ENCODE measurements at regions of chr7 and their contacts with region 1.

Region 1: GRCh38 chr7:43700059-43700501 is 29.2 kb downstream of the COA1 start:
- DNase-seq: peak; percentile 43
- H3K4me3 ChIP-seq: no peak overlapping the region
- H3K27ac ChIP-seq: no peak overlapping the region
- H3K27me3 ChIP-seq: no peaks in the 10 kb centered on the region
- CTCF ChIP-seq: peak; percentile 73

Region 2: GRCh38 chr7:43454936-43455518 is 245.1 kb before region 1 on chr7:
- CTCF ChIA-PET with region 1: interaction called, 10 read pairs
- POLR2A ChIA-PET with region 1: no interaction called
- DNase-seq: no peak
- H3K4me3 ChIP-seq: no peak overlapping the region
- H3K27ac ChIP-seq: no peak overlapping the region
- H3K27me3 ChIP-seq: no peaks in the 10 kb centered on the region
- CTCF ChIP-seq: peak; percentile 60

Region 3: GRCh38 chr7:43590862-43591550 is 109.1 kb before region 1 on chr7:
- CTCF ChIA-PET with region 1: interaction called, 456 read pairs
- POLR2A ChIA-PET with region 1: no interaction called
- DNase-seq: no peak
- H3K4me3 ChIP-seq: no peak overlapping the region
- H3K27ac ChIP-seq: no peak overlapping the region
- H3K27me3 ChIP-seq: no peaks in the 10 kb centered on the region
- CTCF ChIP-seq: no peak

Region 4: DNA sequence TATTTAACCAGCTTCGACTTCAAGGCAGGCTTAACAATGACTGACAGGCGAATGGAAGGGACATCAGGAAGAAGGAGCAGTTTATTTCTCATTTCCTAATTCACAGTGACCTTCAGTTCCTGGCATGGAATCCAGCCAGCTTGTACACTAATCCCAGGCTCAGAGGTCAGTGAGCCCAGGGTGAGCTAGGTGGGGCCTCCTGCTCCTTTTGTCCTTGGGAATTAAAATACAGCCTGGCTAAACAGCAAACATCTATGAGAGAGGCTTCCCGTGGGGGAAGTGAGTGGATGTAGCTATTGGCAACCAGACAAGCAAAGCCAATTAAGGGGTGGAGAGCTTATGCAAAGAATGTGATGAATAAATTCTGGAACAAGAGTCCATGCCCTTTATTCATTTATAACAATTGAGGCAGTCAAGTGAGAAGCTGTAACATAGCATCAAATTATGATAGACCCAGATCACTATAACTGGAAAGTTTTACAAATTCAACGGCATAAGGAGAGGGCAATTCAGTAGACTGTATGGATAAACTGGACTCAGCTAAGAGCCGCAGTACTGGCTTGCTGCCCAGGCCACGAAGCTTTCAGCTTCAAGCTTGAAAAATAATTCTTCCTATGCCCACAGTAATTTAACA is 60.1 kb before region 1 on chr7:
- CTCF ChIA-PET with region 1: interaction called, 28 read pairs
- POLR2A ChIA-PET with region 1: no interaction called
- DNase-seq: no peak
- H3K4me3 ChIP-seq: no peak overlapping the region
- H3K27ac ChIP-seq: peak overlapping the region; percentile 78
- H3K27me3 ChIP-seq: no peaks in the 10 kb centered on the region
- CTCF ChIP-seq: no peak

Region 5: GRCh38 chr7:43664681-43665080 is 35.4 kb before region 1 on chr7:
- CTCF ChIA-PET with region 1: interaction called, 12 read pairs
- POLR2A ChIA-PET with region 1: no interaction called
- DNase-seq: no peak
- H3K4me3 ChIP-seq: no peak overlapping the region
- H3K27ac ChIP-seq: no peak overlapping the region
- H3K27me3 ChIP-seq: no peaks in the 10 kb centered on the region
- CTCF ChIP-seq: no peak

Region 6: DNA sequence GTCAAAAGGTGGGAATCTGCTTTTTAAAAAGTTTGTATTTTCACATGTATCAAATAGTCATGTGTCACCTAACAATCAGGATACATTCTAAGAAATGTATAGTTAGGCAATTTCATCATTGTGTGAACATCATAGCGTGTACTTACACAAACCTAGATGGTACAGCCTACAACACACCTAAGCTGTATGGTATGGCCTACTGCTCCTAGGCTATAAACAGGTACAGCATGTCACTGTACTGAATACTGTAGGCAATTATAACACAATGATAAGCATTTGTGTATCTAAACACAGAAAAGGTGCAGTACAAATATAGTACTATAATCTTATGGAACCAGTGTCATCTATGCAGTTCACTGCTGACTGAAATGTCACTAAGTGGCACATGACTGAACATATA is 11.4 kb after region 1 on chr7:
- CTCF ChIA-PET with region 1: interaction called, 15 read pairs
- POLR2A ChIA-PET with region 1: no interaction called
- DNase-seq: no peak
- H3K4me3 ChIP-seq: no peak overlapping the region
- H3K27ac ChIP-seq: no peak overlapping the region
- H3K27me3 ChIP-seq: no peaks in the 10 kb centered on the region
- CTCF ChIP-seq: no peak

Region 7: DNA sequence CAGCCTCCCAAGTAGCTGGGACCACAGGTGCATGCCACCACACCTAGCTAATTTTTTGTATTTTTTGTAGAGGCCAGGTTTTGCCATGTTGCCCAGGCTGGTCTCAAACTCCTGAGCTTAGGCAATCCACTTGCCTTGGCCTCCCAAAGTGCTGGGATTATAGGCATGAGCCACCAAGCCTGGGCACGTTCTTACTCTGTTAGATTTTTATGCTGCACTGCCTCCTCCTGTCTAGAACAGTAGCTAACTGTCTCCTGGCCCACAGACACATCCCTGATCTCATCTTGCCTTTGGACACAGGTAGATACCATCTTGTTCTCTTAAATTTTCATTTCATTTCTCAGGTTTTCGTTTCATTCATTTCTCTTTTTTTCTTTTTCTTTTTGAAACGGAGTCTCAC is 99.5 kb after region 1 on chr7:
- CTCF ChIA-PET with region 1: interaction called, 16 read pairs
- POLR2A ChIA-PET with region 1: no interaction called
- DNase-seq: no peak
- H3K4me3 ChIP-seq: no peak overlapping the region
- H3K27ac ChIP-seq: no peak overlapping the region
- H3K27me3 ChIP-seq: no peaks in the 10 kb centered on the region
- CTCF ChIP-seq: no peak